Activated CD8-positive, alpha-beta T cell treated with anti-CD3 and anti-CD28 coated beads, Interleukin-2, amount 10 ng/mL, durations not matched to agents 7 days and 5 days (primary cell): ENCODE measurements at regions of chr14 and their contacts with region 1.

Region 1: DNA sequence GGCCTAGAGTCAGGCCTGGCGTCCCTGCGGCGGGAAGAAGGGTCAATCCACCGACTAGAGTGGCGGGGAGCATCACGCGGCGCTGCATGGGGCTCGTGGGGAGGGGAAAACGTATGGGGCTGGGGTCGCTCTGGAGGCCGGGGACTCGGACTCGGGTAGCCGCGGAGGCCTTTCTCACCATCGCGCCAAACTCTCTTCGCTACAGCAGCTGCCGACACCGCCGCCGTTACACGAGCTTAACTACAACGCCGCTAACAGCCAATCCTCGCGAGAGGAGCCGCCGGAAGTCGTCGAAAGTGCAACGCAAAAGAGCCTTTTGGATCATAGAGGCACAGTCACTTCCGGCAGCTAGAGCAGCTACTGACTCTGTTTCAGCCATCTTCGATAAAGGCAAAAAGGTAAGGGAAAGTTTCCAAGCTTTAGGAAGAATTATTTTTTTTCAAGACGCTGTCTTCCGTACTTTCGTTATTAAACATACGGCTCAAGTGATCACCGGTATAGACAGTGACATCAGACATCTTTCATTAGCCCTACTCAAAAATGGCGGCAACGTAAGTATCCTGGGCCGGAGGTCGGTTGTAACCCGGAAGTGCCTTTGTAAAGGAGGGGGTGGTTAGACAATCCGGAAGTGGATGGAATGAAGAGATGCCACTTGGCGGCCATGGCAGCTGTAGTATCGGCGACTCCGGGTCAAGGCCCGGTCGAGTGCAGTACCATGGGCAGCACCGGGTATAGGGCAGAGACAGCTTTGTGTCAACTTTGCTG is at the starts of genes ERH and SLC39A9:
- DNase-seq: peak; percentile 97
- ATAC-seq: peak; percentile 85
- H3K4me3 Mint-ChIP-seq: peak within 1 kb of the TSS; percentile 93
- H3K27ac Mint-ChIP-seq: peak within 1 kb of the TSS; percentile 99
- H3K4me1 Mint-ChIP-seq: peaks cover 66% of the 10 kb centered on the region
- H3K27me3 Mint-ChIP-seq: no peaks in the 10 kb centered on the region
- total RNA-seq, gene ERH: 290 to 318 TPM
- total RNA-seq, gene SLC39A9: 44.5 to 46.2 TPM

Region 2: DNA sequence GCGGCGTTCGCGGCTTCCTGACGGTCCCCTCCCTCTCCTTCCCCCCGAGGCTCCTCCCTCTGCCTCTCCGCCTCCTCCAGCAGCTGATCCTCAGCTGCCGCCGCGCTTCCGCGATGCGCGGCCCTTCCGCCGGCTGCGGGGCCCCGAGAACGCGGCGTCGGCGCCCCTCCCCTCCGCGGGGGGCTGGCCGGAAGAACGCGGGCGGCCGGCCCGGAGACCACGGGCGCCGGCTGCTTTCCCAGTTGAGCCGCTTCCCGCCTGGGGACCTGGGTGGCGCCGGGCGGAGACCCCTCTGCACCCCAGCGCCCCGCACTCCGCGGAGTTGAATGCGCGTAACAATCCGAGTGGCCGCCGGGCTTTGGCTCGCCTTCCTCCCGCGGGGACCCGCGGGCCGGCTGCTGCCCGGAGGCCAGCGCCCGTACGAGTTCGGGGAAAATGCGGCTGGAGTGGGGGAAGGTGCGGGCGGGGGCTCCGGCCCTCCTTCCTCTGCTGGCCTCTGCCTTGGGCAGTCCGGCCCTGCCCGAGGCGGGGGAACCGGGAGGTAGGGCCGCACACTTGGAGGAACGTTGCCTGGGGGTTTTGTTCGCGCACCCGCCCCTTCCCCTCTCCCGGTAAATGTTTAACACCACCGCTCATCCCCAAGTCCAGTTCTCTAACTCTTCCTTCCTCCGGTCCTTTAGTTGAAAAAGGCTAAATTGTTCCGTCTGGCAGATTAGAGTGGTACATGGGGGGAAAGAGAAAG is 244.9 kb before region 1 on chr14:
- CTCF ChIA-PET with region 1: no interaction called
- POLR2A ChIA-PET with region 1: interaction called, 16 read pairs
- DNase-seq: peak; percentile 97
- ATAC-seq: peak; percentile 95
- H3K4me3 Mint-ChIP-seq: peak overlapping the region; percentile 92
- H3K27ac Mint-ChIP-seq: peak overlapping the region; percentile 86
- H3K4me1 Mint-ChIP-seq: peaks cover 31% of the 10 kb centered on the region
- H3K27me3 Mint-ChIP-seq: peaks cover 24% of the 10 kb centered on the region

Region 3: GRCh38 chr14:69242311-69243224 is 155.7 kb before region 1 on chr14:
- CTCF ChIA-PET with region 1: interaction called, 14 read pairs
- POLR2A ChIA-PET with region 1: no interaction called
- DNase-seq: peak; percentile 71
- ATAC-seq: peak; percentile 63
- H3K4me3 Mint-ChIP-seq: no peak overlapping the region
- H3K27ac Mint-ChIP-seq: no peak overlapping the region
- H3K4me1 Mint-ChIP-seq: peaks cover 2% of the 10 kb centered on the region
- H3K27me3 Mint-ChIP-seq: peaks cover 5% of the 10 kb centered on the region

Region 4: DNA sequence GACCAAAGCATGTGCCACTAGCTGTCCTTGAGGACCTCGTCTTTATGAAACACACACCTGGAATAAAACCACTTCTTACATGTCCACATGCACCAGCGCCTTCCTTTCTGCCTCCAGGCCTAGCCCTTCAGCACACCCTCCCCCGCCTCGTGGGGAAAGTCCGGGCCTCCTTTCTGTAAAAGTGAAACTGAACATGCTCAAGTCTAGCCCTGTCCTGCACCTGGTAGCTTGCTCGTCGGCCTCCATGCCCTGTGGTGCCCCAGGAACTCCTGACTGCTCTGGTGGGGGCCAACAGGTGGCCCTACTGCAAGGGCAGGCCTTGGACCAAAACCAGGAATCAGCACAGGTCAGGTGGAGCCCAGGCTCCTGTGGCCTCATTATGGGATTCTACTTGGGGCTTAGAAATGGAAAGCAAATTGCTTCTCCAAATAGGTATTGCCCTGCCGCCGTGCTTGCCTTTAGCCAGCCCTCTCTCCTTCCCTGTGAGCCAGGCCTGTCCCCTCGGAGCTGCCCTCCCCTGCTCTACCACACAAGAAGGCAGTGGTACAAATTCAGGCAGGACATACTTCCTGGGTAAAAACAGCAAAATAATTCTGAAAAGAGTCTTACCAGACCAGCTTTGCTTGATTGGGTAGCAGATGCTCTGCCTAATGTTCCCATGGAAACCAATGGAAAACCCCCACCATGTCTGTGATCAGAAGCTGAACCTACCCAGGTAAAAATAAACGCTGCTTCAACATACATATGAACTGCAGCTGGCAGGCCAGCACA is 43.7 kb before region 1 on chr14:
- CTCF ChIA-PET with region 1: interaction called, 9 read pairs
- POLR2A ChIA-PET with region 1: interaction called, 13 read pairs
- DNase-seq: peak; percentile 74
- ATAC-seq: peak; percentile 96
- H3K4me3 Mint-ChIP-seq: peak overlapping the region; percentile 42
- H3K27ac Mint-ChIP-seq: peak overlapping the region; percentile 87
- H3K4me1 Mint-ChIP-seq: peaks cover 20% of the 10 kb centered on the region
- H3K27me3 Mint-ChIP-seq: no peaks in the 10 kb centered on the region

Region 5: DNA sequence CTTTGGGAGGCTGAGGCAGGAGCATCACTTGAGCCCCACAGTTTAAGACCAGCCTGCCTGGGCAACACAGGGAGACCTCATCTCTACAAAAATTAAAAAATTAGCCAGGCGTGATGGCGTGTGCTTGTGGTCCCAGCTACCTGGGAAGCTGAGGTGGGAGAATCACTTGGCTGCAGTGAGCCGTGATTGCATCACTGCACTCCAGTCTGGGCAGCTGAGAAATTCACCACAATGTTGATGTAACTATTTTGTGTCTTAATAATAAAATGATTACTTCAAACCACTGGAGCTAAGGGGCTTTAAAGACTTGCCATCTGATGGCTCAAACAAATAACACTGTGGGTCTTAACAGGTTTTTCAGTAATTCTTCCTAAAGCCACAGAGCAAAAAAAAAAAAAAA is 10.9 kb before region 1 on chr14:
- CTCF ChIA-PET with region 1: interaction called, 3 read pairs
- POLR2A ChIA-PET with region 1: interaction called, 12 read pairs
- DNase-seq: no peak
- ATAC-seq: no peak
- H3K4me3 Mint-ChIP-seq: no peak overlapping the region
- H3K27ac Mint-ChIP-seq: no peak overlapping the region
- H3K4me1 Mint-ChIP-seq: peaks cover 30% of the 10 kb centered on the region
- H3K27me3 Mint-ChIP-seq: no peaks in the 10 kb centered on the region

Region 6: GRCh38 chr14:69475194-69475818 is 77.1 kb after region 1 on chr14:
- CTCF ChIA-PET with region 1: no interaction called
- POLR2A ChIA-PET with region 1: no interaction called
- DNase-seq: peak; percentile 24
- ATAC-seq: peak; percentile 49
- H3K4me3 Mint-ChIP-seq: no peak overlapping the region
- H3K27ac Mint-ChIP-seq: no peak overlapping the region
- H3K4me1 Mint-ChIP-seq: peaks cover 3% of the 10 kb centered on the region
- H3K27me3 Mint-ChIP-seq: no peaks in the 10 kb centered on the region